Activated CD4-positive, alpha-beta T cell treated with anti-CD3 and anti-CD28 coated beads, Interleukin-2, amount 10 ng/mL, durations not matched to agents 24 days and 14 days (primary cell): ENCODE measurements at regions of chr1 and their contacts with region 1.

Region 1: DNA sequence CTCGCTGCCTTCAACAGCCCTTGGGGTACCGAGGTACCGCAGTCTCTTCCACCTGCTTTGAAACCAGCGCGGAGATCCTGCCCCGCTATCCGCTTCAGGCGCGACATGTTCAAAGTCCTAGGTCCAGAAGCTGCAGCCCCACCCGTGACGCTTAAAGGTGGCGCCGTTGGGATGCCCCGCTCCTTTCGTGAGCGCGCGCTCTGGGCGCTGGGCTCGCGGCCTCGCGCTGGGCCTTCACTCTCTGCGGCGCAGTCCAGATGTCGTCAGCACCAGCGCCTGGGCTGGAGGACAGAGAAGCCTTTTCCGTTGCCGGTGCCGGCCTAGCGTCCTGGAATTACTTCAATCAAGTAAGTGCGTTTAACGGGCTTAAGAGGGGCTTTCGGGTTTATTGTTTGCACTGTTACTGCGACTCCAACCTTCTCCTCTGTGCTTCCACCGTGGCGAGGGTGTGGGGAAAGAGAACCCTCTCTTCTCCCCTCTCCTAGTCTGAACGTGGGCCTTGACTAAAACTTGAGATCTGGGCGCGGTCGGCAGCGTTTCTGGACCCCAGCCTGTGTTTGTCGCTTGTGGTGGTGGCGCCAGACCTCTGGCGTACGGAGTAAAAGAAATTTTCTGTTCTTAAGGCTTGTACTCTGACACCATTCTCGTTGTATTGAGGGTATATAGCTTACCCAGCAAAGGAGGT is at the start of gene LRRC40:
- DNase-seq: peak; percentile 99
- H3K4me3 Mint-ChIP-seq: peak within 1 kb of the TSS; percentile 95
- H3K27ac Mint-ChIP-seq: peak within 1 kb of the TSS; percentile 99
- H3K4me1 Mint-ChIP-seq: peaks cover 49% of the 10 kb centered on the region
- H3K27me3 Mint-ChIP-seq: no peaks in the 10 kb centered on the region
- total RNA-seq, gene LRRC40: 23.3 and 25.3 TPM in 2 replicates

Region 2: GRCh38 chr1:70221241-70222121 is 15.9 kb after region 1 on chr1 and contains the start of gene SRSF11:
- intact Hi-C with region 1: loop called (anchors 1 kb)
- DNase-seq: peak; percentile 99
- H3K4me3 Mint-ChIP-seq: peak within 1 kb of the TSS; percentile 96
- H3K27ac Mint-ChIP-seq: peak within 1 kb of the TSS; percentile 99
- H3K4me1 Mint-ChIP-seq: peaks cover 33% of the 10 kb centered on the region
- H3K27me3 Mint-ChIP-seq: no peaks in the 10 kb centered on the region
- total RNA-seq, gene SRSF11: 187 and 195 TPM in 2 replicates